ENCODE measurements at regions of chr1 and their contacts with region 1.

Region 1: DNA sequence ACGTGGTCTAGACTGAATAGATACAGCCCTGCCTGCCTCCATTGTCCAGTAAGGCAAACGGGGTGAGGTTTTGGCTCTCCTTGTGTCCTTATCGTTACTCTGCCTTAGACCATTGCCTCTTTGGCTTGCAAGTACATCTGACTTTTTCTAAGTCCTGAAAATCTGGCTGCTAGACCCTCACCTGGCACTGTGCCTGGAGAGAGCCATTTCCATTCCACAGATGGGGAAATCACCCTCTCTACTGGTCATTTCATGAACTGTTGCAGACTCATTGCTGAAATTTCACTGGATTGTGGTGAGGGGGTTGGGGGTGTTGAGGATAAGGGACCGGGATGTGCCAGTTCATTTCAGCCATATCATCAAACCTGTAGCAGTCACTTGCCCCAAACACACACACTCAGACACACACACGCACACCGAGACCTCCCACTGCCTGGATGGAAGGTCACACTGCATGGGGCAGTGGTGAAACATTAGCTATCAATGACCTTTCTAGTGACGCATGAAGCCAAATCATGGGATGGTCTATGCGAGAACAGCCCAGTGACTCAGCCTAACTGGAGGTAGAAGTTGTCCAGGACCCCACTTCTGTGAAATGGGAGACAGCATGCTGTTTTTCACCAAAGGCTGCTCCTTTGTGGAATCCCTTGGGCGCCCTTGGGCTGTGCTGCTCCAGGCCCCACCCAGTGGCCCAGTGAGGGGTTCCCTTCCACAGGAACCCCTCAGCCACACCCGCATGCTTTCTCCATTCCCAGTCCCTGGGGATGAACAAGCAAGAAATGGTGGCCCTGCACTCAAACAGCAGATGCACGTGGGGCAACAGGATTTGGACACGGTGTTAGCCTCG is 34.9 kb upstream of the VASH2 start:
- DNase-seq: peak in 1 of 2 experiments; percentile 38
- H3K4me3 ChIP-seq: no peak overlapping the region
- H3K4me3 Mint-ChIP-seq: no peak overlapping the region
- H3K27ac Mint-ChIP-seq: no peak overlapping the region
- H3K4me1 ChIP-seq: no peaks in the 10 kb centered on the region
- H3K4me1 Mint-ChIP-seq: peaks cover 15% of the 10 kb centered on the region
- H3K27me3 ChIP-seq: no peaks in the 10 kb centered on the region
- H3K27me3 Mint-ChIP-seq: no peaks in the 10 kb centered on the region
- CTCF ChIP-seq: peak; percentile 42 to 54

Region 2: DNA sequence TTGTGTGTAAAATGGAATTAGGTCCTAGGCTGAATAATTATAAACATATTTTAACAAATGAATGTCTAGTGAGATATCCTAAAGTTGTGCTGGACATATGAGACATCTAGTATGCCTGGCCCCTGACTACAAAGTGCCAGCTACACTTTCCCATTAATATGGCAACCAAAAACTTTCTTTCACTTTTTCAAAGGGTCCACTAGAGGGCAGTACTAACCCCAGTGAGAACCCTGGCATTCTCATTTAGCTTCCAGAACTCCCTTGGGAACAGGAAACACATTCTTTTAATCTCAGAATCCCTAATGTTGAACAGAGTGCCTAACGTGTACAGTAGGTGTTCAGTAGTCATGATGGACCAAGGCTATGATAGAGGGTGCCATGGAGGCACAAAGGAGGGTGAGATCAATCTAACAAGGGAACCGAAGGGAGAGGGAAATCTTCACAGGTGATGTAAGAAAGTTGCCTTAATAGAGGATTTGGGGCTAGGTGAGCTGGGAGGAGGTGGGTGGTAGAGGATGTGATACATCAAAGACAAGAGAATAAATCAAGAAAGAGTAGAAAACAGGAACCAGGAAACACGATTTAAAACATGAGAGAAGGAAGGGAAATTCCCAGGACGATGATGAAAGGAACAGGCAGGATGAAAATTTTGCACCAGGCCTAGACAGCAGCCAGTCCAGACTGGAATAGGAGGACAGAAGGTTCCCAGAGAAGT is 165.5 kb before region 1 on chr1:
- CTCF ChIA-PET with region 1: no interaction called
- POLR2A ChIA-PET with region 1: no interaction called
- intact Hi-C with region 1: loop called (anchors 1 kb)
- DNase-seq: peak in 1 of 2 experiments; percentile 47
- H3K4me3 ChIP-seq: no peak overlapping the region
- H3K4me3 Mint-ChIP-seq: no peak overlapping the region
- H3K27ac Mint-ChIP-seq: peak overlapping the region; percentile 3
- H3K4me1 ChIP-seq: no peaks in the 10 kb centered on the region
- H3K4me1 Mint-ChIP-seq: peaks cover 8% of the 10 kb centered on the region
- H3K27me3 ChIP-seq: no peaks in the 10 kb centered on the region
- H3K27me3 Mint-ChIP-seq: no peaks in the 10 kb centered on the region
- CTCF ChIP-seq: peak; percentile 77 to 80

Region 3: DNA sequence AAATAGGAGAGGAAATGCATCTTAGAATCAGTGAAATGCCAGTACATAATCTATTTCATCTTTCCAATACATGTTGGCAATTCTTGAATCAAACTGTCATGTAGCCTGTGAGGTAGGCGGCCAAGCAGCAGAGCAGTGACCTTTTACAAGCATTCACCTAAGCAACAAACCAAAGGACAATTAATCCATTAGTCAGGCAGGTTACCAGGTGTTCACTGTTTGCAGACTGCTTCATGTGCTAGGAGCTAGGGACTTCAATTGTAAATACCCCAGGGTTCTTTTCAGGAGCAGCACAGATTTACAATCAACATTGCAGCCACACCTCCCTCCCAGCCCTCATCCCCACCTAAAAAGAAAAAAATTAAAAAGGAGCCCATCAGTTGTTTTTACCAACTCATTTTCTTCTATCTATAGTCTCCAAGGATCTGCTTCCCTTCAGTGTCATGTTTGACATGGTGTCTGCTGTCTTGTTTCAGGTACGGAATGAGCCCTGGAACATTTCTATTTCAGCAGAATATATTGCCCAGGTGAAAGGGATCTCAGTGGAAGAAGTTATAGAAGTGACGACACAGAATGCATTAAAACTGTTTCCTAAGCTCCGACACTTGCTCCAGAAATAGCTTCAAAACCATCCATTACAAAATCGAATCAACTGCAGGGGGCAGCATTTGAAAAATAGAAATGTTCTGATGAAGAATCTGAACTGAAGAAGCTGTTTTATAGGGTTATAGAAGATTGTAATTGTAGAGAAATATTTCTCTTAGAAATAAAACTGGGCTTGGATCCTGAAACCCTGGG is 100.7 kb before region 1 on chr1:
- CTCF ChIA-PET with region 1: no interaction called
- POLR2A ChIA-PET with region 1: no interaction called
- intact Hi-C with region 1: loop called (anchors 1 kb)
- DNase-seq: peak in 1 of 2 experiments; percentile 41
- H3K4me3 ChIP-seq: no peak overlapping the region
- H3K4me3 Mint-ChIP-seq: no peak overlapping the region
- H3K27ac Mint-ChIP-seq: no peak overlapping the region
- H3K4me1 ChIP-seq: peaks cover 7% of the 10 kb centered on the region
- H3K4me1 Mint-ChIP-seq: peaks cover 12% of the 10 kb centered on the region
- H3K27me3 ChIP-seq: no peaks in the 10 kb centered on the region
- H3K27me3 Mint-ChIP-seq: no peaks in the 10 kb centered on the region
- CTCF ChIP-seq: peak; percentile 11 to 36

Region 4: GRCh38 chr1:212938846-212939245 is 23.4 kb after region 1 on chr1:
- CTCF ChIA-PET with region 1: no interaction called
- POLR2A ChIA-PET with region 1: no interaction called
- intact Hi-C with region 1: no loop called
- DNase-seq: no peak
- H3K4me3 ChIP-seq: no peak overlapping the region
- H3K4me3 Mint-ChIP-seq: no peak overlapping the region
- H3K27ac Mint-ChIP-seq: no peak overlapping the region
- H3K4me1 ChIP-seq: no peaks in the 10 kb centered on the region
- H3K4me1 Mint-ChIP-seq: peaks cover 6% of the 10 kb centered on the region
- H3K27me3 ChIP-seq: no peaks in the 10 kb centered on the region
- H3K27me3 Mint-ChIP-seq: no peaks in the 10 kb centered on the region
- CTCF ChIP-seq: no peak

Measured in Caco-2 (cell line).